HEK293 (cell line): ENCODE measurements at regions of chr5 and their contacts with region 1.

Region 1: GRCh38 chr5:147857302-147858129 is 21.0 kb upstream of the SCGB3A2 start:
- H3K4me3 ChIP-seq: no peak overlapping the region
- H3K27ac ChIP-seq: no peak overlapping the region
- H3K4me1 ChIP-seq: no peaks in the 10 kb centered on the region
- CTCF ChIP-seq: no peak

Region 2: DNA sequence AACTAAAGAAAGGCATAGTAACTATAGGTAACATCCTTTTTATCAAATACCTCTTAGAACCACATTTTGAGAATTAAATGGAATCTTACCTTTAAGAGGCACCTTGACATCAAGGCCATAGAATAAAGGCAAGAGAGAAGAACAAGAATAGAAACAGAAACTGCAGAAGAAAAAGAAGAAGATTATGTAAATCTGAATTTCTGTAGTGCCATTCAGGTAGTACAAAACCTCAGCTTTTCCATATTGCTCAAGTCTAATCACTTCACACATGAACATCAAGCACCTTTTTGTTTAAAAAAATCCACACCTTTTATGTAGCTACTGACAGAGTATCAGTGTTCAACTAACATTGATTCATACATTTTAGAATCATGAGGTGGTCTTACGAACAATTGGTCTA is 255.9 kb before region 1 on chr5:
- CTCF ChIA-PET with region 1: no interaction called
- POLR2A ChIA-PET with region 1: no interaction called
- H3K4me3 ChIP-seq: no peak overlapping the region
- H3K27ac ChIP-seq: no peak overlapping the region
- H3K4me1 ChIP-seq: no peaks in the 10 kb centered on the region
- CTCF ChIP-seq: no peak

Region 3: GRCh38 chr5:147648597-147648996 is 208.9 kb before region 1 on chr5:
- CTCF ChIA-PET with region 1: no interaction called
- POLR2A ChIA-PET with region 1: no interaction called
- H3K4me3 ChIP-seq: no peak overlapping the region
- H3K27ac ChIP-seq: no peak overlapping the region
- H3K4me1 ChIP-seq: no peaks in the 10 kb centered on the region
- CTCF ChIP-seq: no peak

Region 4: GRCh38 chr5:147887024-147887627 is 29.6 kb after region 1 on chr5:
- CTCF ChIA-PET with region 1: interaction called, 46 read pairs
- POLR2A ChIA-PET with region 1: no interaction called
- H3K4me3 ChIP-seq: no peak overlapping the region
- H3K27ac ChIP-seq: no peak overlapping the region
- H3K4me1 ChIP-seq: no peaks in the 10 kb centered on the region
- CTCF ChIP-seq: no peak